RWPE1 (cell line): ENCODE measurements at regions of chr13 and their contacts with region 1.

Region 1: GRCh38 chr13:46160471-46161066 is 21.4 kb downstream of the LCP1 start:
- DNase-seq: peak; percentile 50
- H3K27ac ChIP-seq: no peak overlapping the region
- CTCF ChIP-seq: peak; percentile 83

Region 2: GRCh38 chr13:46172531-46172991 is 12.0 kb after region 1 on chr13:
- CTCF ChIA-PET with region 1: interaction called, 12 read pairs
- POLR2A ChIA-PET with region 1: no interaction called
- DNase-seq: no peak
- H3K27ac ChIP-seq: no peak overlapping the region
- CTCF ChIP-seq: no peak